ENCODE measurements at regions of chr5 and their contacts with region 1.

Region 1: GRCh38 chr5:66958980-66959641 is 237.5 kb downstream of the CD180 start:
- DNase-seq: peak in 1 of 2 donors; percentile 66
- ATAC-seq: peak; percentile 71
- H3K4me3 ChIP-seq: peak overlapping the region; percentile 51 to 92
- H3K27ac ChIP-seq: peak overlapping the region in 1 of 2 donors; percentile 64
- H3K4me1 ChIP-seq: peaks cover 1 to 2% of the 10 kb centered on the region in 2 donors
- H3K27me3 ChIP-seq: no peaks in the 10 kb centered on the region

Region 2: GRCh38 chr5:66860199-66860975 is 98.7 kb before region 1 on chr5:
- intact Hi-C with region 1: no loop called
- DNase-seq: no peak
- ATAC-seq: no peak
- H3K4me3 ChIP-seq: peak overlapping the region in 1 of 2 donors; percentile 6
- H3K27ac ChIP-seq: no peak overlapping the region
- H3K4me1 ChIP-seq: no peaks in the 10 kb centered on the region
- H3K27me3 ChIP-seq: peaks cover 0 to 1% of the 10 kb centered on the region in 2 donors

Region 3: GRCh38 chr5:67003935-67004729 is 45.0 kb after region 1 on chr5:
- intact Hi-C with region 1: loop called in 1 of 2 experiments (anchors 2 kb)
- DNase-seq: peak; percentile 89 to 90
- ATAC-seq: peak; percentile 92
- H3K4me3 ChIP-seq: peak overlapping the region; percentile 71 to 97
- H3K27ac ChIP-seq: peak overlapping the region; percentile 89 to 96
- H3K4me1 ChIP-seq: peaks cover 2 to 26% of the 10 kb centered on the region in 2 donors
- H3K27me3 ChIP-seq: no peaks in the 10 kb centered on the region